H1 (cell line): ENCODE measurements at regions of chr10 and their contacts with region 1.

Region 1: GRCh38 chr10:84156768-84157167 is 16.8 kb upstream of the GPR15LG start:
- DNase-seq: no peak
- H3K4me3 ChIP-seq: no peak overlapping the region
- H3K27ac ChIP-seq: no peak overlapping the region
- H3K4me1 ChIP-seq: peaks cover 1 to 20% (median 10%) of the 10 kb centered on the region in 4 experiments; a peak in 6 of 7 replicates
- H3K27me3 ChIP-seq: no peaks in the 10 kb centered on the region
- CTCF ChIP-seq: no peak
- EP300 ChIP-seq: no peak
- POLR2A ChIP-seq: no peak
- RAD21 ChIP-seq: no peak

Region 2: DNA sequence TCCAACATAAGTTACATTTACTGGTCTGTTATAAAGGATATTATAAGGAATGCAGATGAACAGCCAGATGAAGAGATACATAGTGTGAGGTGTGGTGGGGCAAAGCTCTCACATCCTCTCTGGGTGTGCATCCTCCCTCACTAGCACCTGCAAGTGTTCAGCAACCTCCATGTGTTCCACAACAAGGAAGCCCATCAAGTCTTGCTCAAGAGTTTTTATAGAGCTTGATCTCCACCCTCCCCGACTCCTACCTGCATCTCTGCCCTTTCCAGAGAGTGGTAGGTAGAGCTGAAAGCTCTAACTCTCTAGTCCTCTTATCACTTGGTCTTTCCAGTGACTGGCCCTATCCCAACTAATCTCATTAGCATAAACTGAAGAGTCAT is 30.0 kb before region 1 on chr10:
- CTCF ChIA-PET with region 1: no interaction called
- POLR2A ChIA-PET with region 1: no interaction called
- DNase-seq: no peak
- H3K4me3 ChIP-seq: no peak overlapping the region
- H3K27ac ChIP-seq: no peak overlapping the region
- H3K4me1 ChIP-seq: no peaks in the 10 kb centered on the region
- H3K27me3 ChIP-seq: no peaks in the 10 kb centered on the region
- CTCF ChIP-seq: no peak
- EP300 ChIP-seq: no peak
- POLR2A ChIP-seq: no peak
- RAD21 ChIP-seq: no peak

Region 3: GRCh38 chr10:84139126-84140035 is 17.4 kb before region 1 on chr10 and contains the start of gene GHITM:
- CTCF ChIA-PET with region 1: interaction called, 3 read pairs
- POLR2A ChIA-PET with region 1: interaction called, 16 read pairs
- DNase-seq: peak; percentile 97 to 100
- H3K4me3 ChIP-seq: peak within 1 kb of the TSS; percentile 88 to 97 (median 96)
- H3K27ac ChIP-seq: peak within 1 kb of the TSS; percentile 83
- H3K4me1 ChIP-seq: peaks cover 3 to 9% (median 4%) of the 10 kb centered on the region in 4 experiments; a peak in 6 of 7 replicates
- H3K27me3 ChIP-seq: no peaks in the 10 kb centered on the region
- CTCF ChIP-seq: peak; percentile 9 to 38 (median 37); a peak in 2 of 4 replicates
- EP300 ChIP-seq: no peak
- POLR2A ChIP-seq: peak; percentile 77 to 80
- RAD21 ChIP-seq: no peak
- total RNA-seq, gene GHITM: 87.8 and 97.0 TPM in 2 replicates

Region 4: DNA sequence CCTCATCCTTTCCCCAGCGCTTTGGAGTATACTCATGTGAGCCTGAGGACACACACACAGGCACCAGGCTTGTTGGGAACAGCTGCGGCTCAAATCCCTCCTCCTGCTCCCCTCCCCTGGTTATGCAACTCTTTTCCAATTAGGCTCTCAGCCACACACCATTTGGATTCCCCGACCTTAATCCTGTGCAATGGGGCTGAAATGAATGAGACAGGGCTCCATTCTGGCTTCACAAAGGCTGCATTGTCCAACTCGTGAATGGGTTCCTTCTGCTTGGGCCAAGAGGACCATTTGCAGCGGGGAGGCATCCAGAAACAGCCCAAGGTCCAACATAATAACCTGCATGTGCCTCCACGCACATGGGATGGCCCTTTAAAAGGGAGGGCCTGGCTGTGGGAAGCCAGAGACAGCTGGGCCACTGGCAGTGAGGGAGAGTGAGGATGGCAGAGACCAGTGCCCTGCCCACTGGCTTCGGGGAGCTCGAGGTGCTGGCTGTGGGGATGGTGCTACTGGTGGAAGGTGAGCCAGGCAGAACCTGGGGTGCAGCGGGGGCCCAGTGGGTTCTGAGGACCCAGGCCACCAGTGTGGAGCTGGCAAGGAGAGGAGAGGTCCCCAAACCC is 88.0 kb after region 1 on chr10 and contains the start of gene RGR:
- CTCF ChIA-PET with region 1: no interaction called
- POLR2A ChIA-PET with region 1: no interaction called
- DNase-seq: no peak
- H3K4me3 ChIP-seq: no peak within 1 kb of the TSS
- H3K27ac ChIP-seq: no peak within 1 kb of the TSS
- H3K4me1 ChIP-seq: no peaks in the 10 kb centered on the region
- H3K27me3 ChIP-seq: no peaks in the 10 kb centered on the region
- CTCF ChIP-seq: no peak
- EP300 ChIP-seq: no peak
- POLR2A ChIP-seq: no peak
- RAD21 ChIP-seq: no peak
- total RNA-seq, gene RGR: not detected in 2 replicates

Region 5: GRCh38 chr10:84257343-84258020 is 100.7 kb after region 1 on chr10:
- CTCF ChIA-PET with region 1: no interaction called
- POLR2A ChIA-PET with region 1: no interaction called
- DNase-seq: no peak
- H3K4me3 ChIP-seq: no peak overlapping the region
- H3K27ac ChIP-seq: no peak overlapping the region
- H3K4me1 ChIP-seq: no peaks in the 10 kb centered on the region
- H3K27me3 ChIP-seq: peaks cover 0 to 8% (median 8%) of the 10 kb centered on the region in 4 experiments; a peak in 6 of 7 replicates
- CTCF ChIP-seq: no peak
- EP300 ChIP-seq: no peak
- POLR2A ChIP-seq: no peak
- RAD21 ChIP-seq: no peak